H1 (cell line): ENCODE measurements at regions of chr2 and their contacts with region 1.

Region 1: GRCh38 chr2:85181134-85181631 is 48.0 kb downstream of the TCF7L1 start:
- DNase-seq: no peak
- H3K4me3 ChIP-seq: no peak overlapping the region
- H3K27ac ChIP-seq: no peak overlapping the region
- H3K4me1 ChIP-seq: peaks cover 26 to 45% (median 29%) of the 10 kb centered on the region in 4 experiments
- H3K27me3 ChIP-seq: no peaks in the 10 kb centered on the region
- CTCF ChIP-seq: peak in 2 of 3 experiments; percentile 3 to 28; a peak in 3 of 4 replicates
- EP300 ChIP-seq: no peak
- POLR2A ChIP-seq: no peak
- RAD21 ChIP-seq: no peak

Region 2: GRCh38 chr2:84881581-84882414 is 299.4 kb before region 1 on chr2:
- CTCF ChIA-PET with region 1: no interaction called
- POLR2A ChIA-PET with region 1: no interaction called
- DNase-seq: peak in 1 of 2 experiments; percentile 92
- H3K4me3 ChIP-seq: peak overlapping the region; percentile 48 to 75 (median 62)
- H3K27ac ChIP-seq: no peak overlapping the region
- H3K4me1 ChIP-seq: peaks cover 0 to 3% (median under 1%) of the 10 kb centered on the region in 4 experiments; a peak in 3 of 7 replicates
- H3K27me3 ChIP-seq: peaks cover 12 to 42% (median 39%) of the 10 kb centered on the region in 4 experiments
- CTCF ChIP-seq: peak; percentile 66 to 86 (median 72)
- EP300 ChIP-seq: no peak
- POLR2A ChIP-seq: peak in 1 of 2 experiments; percentile 12; a peak in 1 of 3 replicates
- RAD21 ChIP-seq: peak; percentile 80 to 82

Region 3: DNA sequence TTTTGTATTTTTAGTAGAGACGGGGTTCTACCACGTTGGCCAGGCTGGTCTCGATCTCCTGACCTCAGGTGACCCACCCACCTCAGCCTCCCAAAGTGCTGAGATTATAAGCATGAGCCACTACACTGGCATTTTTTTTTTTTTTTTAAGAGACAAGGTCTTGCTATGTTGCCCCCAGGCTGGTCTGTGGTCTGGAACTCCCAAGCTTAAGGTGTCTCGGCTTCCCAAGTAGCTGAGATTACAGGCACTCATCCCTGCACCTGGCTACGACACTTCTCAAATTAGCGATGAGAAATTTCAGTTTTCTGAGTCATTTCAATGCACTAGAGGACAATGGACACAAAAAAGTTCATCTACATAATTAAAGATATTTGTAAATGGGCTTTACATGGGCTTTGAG is 84.6 kb before region 1 on chr2:
- CTCF ChIA-PET with region 1: no interaction called
- POLR2A ChIA-PET with region 1: no interaction called
- DNase-seq: no peak
- H3K4me3 ChIP-seq: no peak overlapping the region
- H3K27ac ChIP-seq: no peak overlapping the region
- H3K4me1 ChIP-seq: no peaks in the 10 kb centered on the region
- H3K27me3 ChIP-seq: no peaks in the 10 kb centered on the region
- CTCF ChIP-seq: no peak
- EP300 ChIP-seq: no peak
- POLR2A ChIP-seq: no peak
- RAD21 ChIP-seq: no peak

Region 4: DNA sequence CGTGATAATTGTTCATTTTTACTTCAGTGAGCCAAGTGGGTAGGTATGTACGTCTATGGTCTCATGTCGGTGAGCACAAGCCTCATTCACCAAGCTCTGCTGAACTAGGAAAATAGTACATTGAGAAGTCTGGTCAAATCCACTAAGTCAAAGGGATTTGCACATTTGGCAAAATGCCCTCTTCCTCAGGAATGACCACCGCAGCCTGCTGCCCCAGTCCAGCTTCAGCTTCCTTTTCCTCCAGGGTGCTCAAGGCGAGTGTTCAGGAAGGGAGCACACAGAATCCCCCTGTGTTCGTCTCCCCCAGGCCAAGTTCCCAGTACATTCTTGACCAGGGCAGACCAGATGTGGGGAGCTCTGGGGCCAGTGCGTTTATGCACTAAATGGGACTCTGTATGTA is 25.0 kb before region 1 on chr2:
- CTCF ChIA-PET with region 1: interaction called, 46 read pairs
- POLR2A ChIA-PET with region 1: interaction called, 6 read pairs
- DNase-seq: no peak
- H3K4me3 ChIP-seq: no peak overlapping the region
- H3K27ac ChIP-seq: no peak overlapping the region
- H3K4me1 ChIP-seq: peaks cover 2 to 18% (median 10%) of the 10 kb centered on the region in 4 experiments; a peak in 6 of 7 replicates
- H3K27me3 ChIP-seq: no peaks in the 10 kb centered on the region
- CTCF ChIP-seq: no peak
- EP300 ChIP-seq: no peak
- POLR2A ChIP-seq: no peak
- RAD21 ChIP-seq: no peak

Region 5: DNA sequence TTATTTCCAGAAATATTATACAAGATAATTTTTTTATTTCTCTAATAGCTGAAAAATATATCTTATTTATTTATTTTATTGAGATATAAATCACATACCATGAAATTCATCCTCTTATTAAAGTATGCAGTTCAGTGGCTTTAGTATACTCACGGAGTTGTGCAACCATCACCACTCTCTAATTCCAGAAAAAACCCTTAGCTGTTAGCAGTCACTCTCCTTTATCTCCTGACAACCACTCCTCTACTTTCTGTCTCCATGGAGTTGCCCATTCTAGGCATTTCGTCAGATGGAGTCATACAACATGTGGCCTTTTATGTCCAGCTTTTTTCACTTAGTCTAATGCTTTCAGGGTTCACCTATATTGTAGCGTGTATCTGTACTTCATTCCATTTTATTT is 18.5 kb after region 1 on chr2:
- CTCF ChIA-PET with region 1: interaction called, 53 read pairs
- POLR2A ChIA-PET with region 1: interaction called, 3 read pairs
- DNase-seq: no peak
- H3K4me3 ChIP-seq: no peak overlapping the region
- H3K27ac ChIP-seq: no peak overlapping the region
- H3K4me1 ChIP-seq: no peaks in the 10 kb centered on the region; a peak in 1 of 7 replicates
- H3K27me3 ChIP-seq: no peaks in the 10 kb centered on the region
- CTCF ChIP-seq: no peak
- EP300 ChIP-seq: no peak
- POLR2A ChIP-seq: no peak
- RAD21 ChIP-seq: no peak

Region 6: DNA sequence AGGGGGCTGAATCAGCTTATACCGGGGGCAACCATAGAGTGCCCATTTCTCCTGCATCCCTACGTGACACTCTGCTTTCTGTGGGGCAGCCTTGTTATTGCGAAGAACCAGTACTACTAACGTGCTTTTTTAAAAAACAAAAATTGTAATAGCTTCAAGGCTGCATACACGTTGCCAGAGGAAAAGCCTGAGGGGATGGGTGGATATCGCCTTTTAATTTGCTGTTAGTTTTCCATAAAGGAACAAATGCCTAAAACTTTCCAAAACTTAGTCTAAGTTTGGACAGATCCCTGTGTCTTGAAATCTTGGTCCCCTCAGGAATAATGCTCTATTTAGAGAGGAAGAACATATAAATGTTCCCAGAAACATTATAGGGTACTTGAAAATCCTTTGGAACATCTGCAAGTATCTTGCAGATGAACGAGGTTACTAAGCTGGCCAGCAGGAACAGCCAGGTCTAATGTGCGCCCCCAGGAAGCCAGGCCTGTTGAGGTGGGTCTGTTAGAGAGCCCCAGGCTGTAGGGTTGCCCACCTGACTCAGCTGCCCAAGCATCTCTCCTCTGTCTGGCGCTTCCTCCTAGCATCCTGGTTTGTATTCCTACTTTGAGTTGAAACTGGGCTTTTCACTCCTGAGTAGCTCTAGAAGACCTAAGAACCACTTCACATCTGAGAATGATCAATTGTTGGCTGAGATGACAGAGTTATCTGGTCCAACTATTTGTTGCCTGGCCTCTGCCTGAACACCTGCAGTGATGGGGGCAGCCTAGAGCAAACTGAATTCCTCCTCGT is 49.7 kb after region 1 on chr2:
- CTCF ChIA-PET with region 1: interaction called, 20 read pairs
- POLR2A ChIA-PET with region 1: interaction called, 3 read pairs
- DNase-seq: no peak
- H3K4me3 ChIP-seq: peak overlapping the region in 1 of 4 experiments; percentile 35; a peak in 1 of 8 replicates
- H3K27ac ChIP-seq: peak overlapping the region; percentile 42; the same call in 1 of the 2 replicates
- H3K4me1 ChIP-seq: peaks cover 26 to 45% (median 35%) of the 10 kb centered on the region in 4 experiments
- H3K27me3 ChIP-seq: no peaks in the 10 kb centered on the region
- CTCF ChIP-seq: peak in 2 of 3 experiments; percentile 32 to 62; a peak in 3 of 4 replicates
- EP300 ChIP-seq: no peak
- POLR2A ChIP-seq: no peak
- RAD21 ChIP-seq: no peak

Region 7: DNA sequence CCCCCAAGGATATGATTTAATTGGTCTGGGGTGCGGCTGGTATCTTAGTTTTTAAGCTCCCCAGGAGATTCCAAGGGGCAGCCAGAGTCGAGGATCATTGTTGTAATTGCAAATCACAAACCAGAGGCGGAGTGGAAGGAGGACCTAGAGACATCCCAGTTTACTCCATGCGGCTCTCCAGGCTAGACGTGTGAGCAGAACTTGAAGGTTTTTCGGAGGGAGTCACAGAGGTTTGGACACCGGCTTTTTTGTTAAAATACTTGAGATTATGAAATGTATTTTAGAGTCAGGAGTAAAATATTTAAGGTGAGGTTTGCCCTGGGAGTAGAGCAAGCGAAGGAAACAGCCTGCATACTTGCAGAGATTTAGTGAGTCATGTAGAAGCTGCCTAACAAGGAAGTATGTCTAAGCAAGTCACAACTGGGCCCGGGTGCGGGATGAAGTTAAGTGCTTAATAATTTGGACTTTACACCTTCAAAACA is 107.1 kb after region 1 on chr2:
- CTCF ChIA-PET with region 1: interaction called, 64 read pairs
- POLR2A ChIA-PET with region 1: interaction called, 3 read pairs
- DNase-seq: no peak
- H3K4me3 ChIP-seq: no peak overlapping the region
- H3K27ac ChIP-seq: no peak overlapping the region
- H3K4me1 ChIP-seq: peaks cover 0 to 14% (median under 1%) of the 10 kb centered on the region in 4 experiments; a peak in 2 of 7 replicates
- H3K27me3 ChIP-seq: no peaks in the 10 kb centered on the region
- CTCF ChIP-seq: no peak
- EP300 ChIP-seq: no peak
- POLR2A ChIP-seq: no peak
- RAD21 ChIP-seq: no peak